Activated CD4-positive, alpha-beta memory T cell treated with anti-CD3 and anti-CD28 coated beads for 36 hours (primary cell): ENCODE measurements at regions of chr5 and their contacts with region 1.

Region 1: GRCh38 chr5:91311697-91312501 is 71.2 kb downstream of the ARRDC3 start:
- DNase-seq: peak; percentile 82
- H3K4me3 Mint-ChIP-seq: peak overlapping the region; percentile 61
- H3K27ac Mint-ChIP-seq: peak overlapping the region; percentile 95
- H3K4me1 Mint-ChIP-seq: peaks cover 45% of the 10 kb centered on the region
- H3K27me3 Mint-ChIP-seq: no peaks in the 10 kb centered on the region

Region 2: GRCh38 chr5:91162534-91163381 is 149.1 kb before region 1 on chr5:
- CTCF ChIA-PET with region 1: no interaction called
- POLR2A ChIA-PET with region 1: no interaction called
- intact Hi-C with region 1: loop called (anchors 2 kb)
- DNase-seq: peak; percentile 86
- H3K4me3 Mint-ChIP-seq: no peak overlapping the region
- H3K27ac Mint-ChIP-seq: peak overlapping the region; percentile 67
- H3K4me1 Mint-ChIP-seq: peaks cover 19% of the 10 kb centered on the region
- H3K27me3 Mint-ChIP-seq: no peaks in the 10 kb centered on the region

Region 3: DNA sequence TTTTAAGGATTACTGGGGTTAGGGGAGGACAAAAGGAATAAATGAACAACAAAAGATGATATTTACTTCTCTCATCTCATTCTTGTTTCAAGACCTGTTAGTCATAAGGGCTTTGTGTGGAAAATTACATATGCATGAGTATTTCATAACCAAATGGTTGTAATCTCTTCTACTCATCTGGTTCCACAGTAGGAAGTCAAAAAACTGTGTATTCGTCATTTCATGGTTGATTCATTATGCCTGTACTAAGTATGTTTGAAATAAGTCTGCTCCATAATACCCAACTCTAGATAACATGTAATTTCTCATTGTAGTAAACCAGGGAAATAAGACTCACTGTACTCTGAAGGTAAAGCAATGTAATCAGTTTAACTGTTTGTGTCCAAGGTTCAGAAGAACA is 141.6 kb before region 1 on chr5:
- CTCF ChIA-PET with region 1: no interaction called
- POLR2A ChIA-PET with region 1: no interaction called
- intact Hi-C with region 1: loop called (anchors 1 kb)
- DNase-seq: no peak
- H3K4me3 Mint-ChIP-seq: no peak overlapping the region
- H3K27ac Mint-ChIP-seq: peak overlapping the region; percentile 4
- H3K4me1 Mint-ChIP-seq: peaks cover 14% of the 10 kb centered on the region
- H3K27me3 Mint-ChIP-seq: peaks cover 9% of the 10 kb centered on the region

Region 4: DNA sequence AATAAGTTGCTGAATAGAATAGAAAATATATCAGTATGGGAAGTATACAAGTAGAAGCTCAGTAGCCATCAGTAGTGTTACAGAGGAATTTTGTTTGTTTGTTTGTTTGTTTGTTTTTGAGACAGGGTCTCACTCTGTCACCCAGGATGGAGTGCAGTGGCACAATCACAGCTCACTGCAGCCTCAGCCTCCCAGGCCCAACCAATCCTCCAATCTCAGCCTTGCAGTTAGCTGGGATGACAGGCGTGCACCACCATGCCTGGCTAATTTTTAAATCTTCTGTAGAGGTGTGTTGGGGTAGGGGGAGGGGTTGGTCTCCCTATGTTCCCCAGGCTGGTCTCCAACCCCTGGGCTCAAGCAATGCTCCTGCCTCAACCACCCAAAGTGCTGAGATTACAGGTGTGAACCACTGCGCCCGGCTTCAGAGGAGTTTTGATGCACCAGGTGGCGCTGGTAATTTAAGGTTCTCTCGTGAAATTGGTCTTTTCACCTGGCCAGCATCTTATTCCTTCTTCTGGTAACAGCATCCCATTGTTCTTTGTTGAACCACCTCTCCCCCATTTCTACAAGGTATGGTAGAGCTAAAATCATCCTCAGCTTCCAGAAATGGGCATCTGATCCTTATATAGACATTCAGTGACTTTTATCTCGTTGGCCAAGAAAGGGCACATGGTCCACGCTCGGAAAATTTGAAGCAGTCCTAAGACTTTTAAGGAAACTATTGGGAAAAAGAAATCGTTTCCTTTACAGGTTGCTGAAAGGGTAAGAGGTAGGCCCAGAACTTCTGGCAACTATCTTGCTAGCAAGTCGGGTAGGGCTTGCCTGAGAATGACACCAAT is 85.8 kb before region 1 on chr5:
- CTCF ChIA-PET with region 1: interaction called, 5 read pairs
- POLR2A ChIA-PET with region 1: no interaction called
- intact Hi-C with region 1: loop called (anchors 2 kb)
- DNase-seq: peak; percentile 73
- H3K4me3 Mint-ChIP-seq: no peak overlapping the region
- H3K27ac Mint-ChIP-seq: peak overlapping the region; percentile 13
- H3K4me1 Mint-ChIP-seq: peaks cover 4% of the 10 kb centered on the region
- H3K27me3 Mint-ChIP-seq: peaks cover 7% of the 10 kb centered on the region

Region 5: DNA sequence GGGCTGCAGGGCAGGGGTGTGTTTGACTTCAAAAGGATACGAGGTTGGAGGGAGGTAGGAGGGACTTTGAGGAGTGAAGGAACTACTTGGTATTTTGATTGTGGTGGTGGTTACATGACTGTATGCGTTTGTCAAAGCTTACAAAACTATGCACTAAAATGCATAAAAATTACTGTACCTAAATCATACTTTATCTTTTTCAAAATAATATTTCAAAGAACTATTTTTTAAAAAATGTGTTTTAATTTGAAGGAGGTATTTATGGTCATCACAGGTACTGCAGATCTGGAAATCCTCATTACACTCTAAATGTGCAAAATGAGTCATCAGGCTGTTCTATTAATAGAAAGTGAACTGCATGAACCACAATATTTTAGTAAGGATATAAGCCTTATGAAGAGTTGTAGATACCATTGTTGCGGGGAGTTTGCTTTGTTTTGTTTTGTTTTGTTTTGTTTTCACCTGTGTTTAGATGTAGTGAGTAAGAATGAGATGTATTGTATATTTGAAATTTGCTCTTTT is 45.7 kb before region 1 on chr5:
- CTCF ChIA-PET with region 1: no interaction called
- POLR2A ChIA-PET with region 1: interaction called, 4 read pairs
- intact Hi-C with region 1: loop called (anchors 10 kb)
- DNase-seq: no peak
- H3K4me3 Mint-ChIP-seq: no peak overlapping the region
- H3K27ac Mint-ChIP-seq: no peak overlapping the region
- H3K4me1 Mint-ChIP-seq: peaks cover 21% of the 10 kb centered on the region
- H3K27me3 Mint-ChIP-seq: no peaks in the 10 kb centered on the region

Region 6: DNA sequence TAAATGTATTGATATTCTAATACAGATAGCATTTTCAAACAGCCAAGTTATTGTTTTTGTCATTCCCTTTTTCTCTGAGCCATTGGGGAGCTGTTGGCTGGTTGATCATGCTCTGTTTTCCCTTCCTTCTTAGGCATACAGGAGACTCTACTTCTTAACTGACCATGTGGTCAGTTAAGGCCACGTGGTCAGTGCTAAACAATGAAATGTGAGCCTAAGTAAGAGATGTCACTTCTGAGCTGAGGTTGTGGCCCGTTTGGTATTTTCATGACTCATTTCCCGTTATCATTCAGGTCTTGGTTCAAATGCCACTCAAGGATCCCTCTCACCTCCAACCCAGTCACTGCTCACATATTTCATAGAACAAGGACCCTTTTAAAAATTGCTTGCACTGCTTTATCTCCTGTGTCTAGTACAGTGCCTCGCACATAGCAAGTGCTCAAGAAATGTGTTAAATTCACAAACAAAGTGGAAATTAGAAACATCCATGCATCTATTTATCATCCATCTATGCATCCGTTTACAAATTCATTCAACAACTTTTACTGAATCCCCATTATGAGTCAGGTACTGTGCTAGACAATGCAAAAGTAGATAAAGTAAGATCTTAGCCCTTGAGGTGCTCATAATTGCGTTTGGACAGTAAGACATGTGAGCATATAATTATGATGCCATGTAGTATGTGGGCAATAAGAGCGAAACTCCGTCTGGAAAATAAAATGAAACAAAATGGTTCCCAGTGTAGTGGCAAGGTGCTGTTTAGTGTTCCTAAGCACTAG is 20.6 kb after region 1 on chr5:
- CTCF ChIA-PET with region 1: interaction called, 3 read pairs
- POLR2A ChIA-PET with region 1: interaction called, 3 read pairs
- intact Hi-C with region 1: loop called (anchors 1 kb)
- DNase-seq: peak; percentile 41
- H3K4me3 Mint-ChIP-seq: no peak overlapping the region
- H3K27ac Mint-ChIP-seq: no peak overlapping the region
- H3K4me1 Mint-ChIP-seq: peaks cover 15% of the 10 kb centered on the region
- H3K27me3 Mint-ChIP-seq: no peaks in the 10 kb centered on the region

Region 7: DNA sequence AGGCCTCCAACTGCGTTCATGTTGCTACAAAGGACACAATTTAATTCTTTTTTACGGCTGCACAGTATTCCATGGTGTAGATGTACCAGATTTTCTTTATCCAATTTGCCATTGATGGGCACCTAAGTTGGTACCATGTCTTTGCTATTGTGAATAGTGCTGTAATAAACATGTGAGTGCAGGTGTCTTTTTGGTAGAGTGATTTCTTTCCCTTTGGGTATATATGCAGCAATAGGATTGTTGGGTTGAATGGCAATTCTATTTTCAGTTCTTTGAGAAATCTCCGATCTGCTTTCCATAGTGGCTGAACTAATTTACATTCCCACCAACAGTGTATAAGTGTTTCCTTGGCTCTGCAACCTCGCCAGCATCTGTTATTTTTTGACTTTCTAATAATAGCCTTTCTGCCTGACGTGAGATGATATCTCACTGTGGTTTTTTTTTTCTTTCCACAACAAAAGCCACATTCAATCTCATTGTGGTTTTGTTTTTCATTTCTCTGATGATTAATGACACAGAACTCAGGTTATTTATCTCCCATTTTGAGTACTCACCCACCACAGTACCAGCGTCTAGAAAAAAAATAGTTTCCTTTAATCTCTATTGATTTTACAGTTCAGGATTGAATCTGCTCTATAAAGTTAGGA is 49.3 kb after region 1 on chr5:
- CTCF ChIA-PET with region 1: interaction called, 3 read pairs
- POLR2A ChIA-PET with region 1: no interaction called
- intact Hi-C with region 1: loop called (anchors 1 kb)
- DNase-seq: no peak
- H3K4me3 Mint-ChIP-seq: peak overlapping the region; percentile 2
- H3K27ac Mint-ChIP-seq: peak overlapping the region; percentile 56
- H3K4me1 Mint-ChIP-seq: peaks cover 12% of the 10 kb centered on the region
- H3K27me3 Mint-ChIP-seq: peaks cover 15% of the 10 kb centered on the region